ENCODE measurements at regions of chr13 and their contacts with region 1.

Region 1: GRCh38 chr13:41905600-41906254 is 55.2 kb downstream of the VWA8 start:
- DNase-seq: no peak
- ATAC-seq: peak; percentile 95
- H3K4me3 Mint-ChIP-seq: no peak overlapping the region
- H3K27ac Mint-ChIP-seq: no peak overlapping the region
- H3K4me1 Mint-ChIP-seq: peaks cover 24% of the 10 kb centered on the region
- H3K27me3 Mint-ChIP-seq: no peaks in the 10 kb centered on the region
- CTCF ChIP-seq: peak; percentile 80

Region 2: GRCh38 chr13:41077475-41077874 is 828.3 kb before region 1 on chr13:
- CTCF ChIA-PET with region 1: no interaction called
- POLR2A ChIA-PET with region 1: no interaction called
- intact Hi-C with region 1: no loop called
- DNase-seq: no peak
- ATAC-seq: no peak
- H3K4me3 Mint-ChIP-seq: no peak overlapping the region
- H3K27ac Mint-ChIP-seq: no peak overlapping the region
- H3K4me1 Mint-ChIP-seq: no peaks in the 10 kb centered on the region
- H3K27me3 Mint-ChIP-seq: no peaks in the 10 kb centered on the region
- CTCF ChIP-seq: no peak

Region 3: DNA sequence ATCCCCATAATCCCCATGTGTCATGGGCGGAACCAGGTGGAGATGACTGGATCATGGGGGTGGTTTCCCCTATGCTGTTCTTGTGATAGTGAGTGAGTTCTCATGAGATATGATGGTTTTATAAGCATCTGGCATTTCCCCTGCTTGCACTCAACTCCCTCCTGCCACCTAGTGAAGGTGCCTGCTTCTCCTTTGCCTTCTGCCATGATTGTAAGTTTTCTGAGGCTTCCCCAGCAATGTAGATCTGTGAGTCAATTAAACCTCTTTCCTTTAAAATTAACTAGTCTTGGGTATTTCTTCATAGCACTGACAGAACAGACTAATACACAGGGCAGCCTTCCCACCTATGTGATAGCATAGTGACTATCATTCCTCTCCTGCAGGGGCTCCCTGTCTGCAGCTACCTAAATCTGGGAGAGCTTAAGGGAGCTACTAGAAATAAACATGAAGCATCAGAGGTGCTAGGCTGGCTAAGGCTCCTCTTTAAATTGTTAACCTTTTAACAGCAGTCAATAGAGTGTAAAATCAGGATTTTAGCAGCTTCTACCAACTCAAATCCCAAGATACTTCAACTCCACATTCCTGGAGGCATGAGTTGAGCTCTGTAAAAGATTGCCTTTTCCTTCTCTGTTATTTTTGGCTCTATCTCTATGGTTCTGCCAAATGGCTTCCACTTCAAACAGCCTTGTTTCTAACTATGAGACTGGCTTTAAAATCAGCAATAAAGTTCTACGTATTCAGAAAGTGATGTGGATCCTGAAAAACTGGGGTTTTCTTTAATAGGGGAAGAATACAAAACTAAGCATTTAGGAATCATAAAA is 57.1 kb before region 1 on chr13:
- CTCF ChIA-PET with region 1: no interaction called
- POLR2A ChIA-PET with region 1: no interaction called
- intact Hi-C with region 1: no loop called
- DNase-seq: no peak
- ATAC-seq: no peak
- H3K4me3 Mint-ChIP-seq: no peak overlapping the region
- H3K27ac Mint-ChIP-seq: no peak overlapping the region
- H3K4me1 Mint-ChIP-seq: no peaks in the 10 kb centered on the region
- H3K27me3 Mint-ChIP-seq: no peaks in the 10 kb centered on the region
- CTCF ChIP-seq: no peak

Region 4: DNA sequence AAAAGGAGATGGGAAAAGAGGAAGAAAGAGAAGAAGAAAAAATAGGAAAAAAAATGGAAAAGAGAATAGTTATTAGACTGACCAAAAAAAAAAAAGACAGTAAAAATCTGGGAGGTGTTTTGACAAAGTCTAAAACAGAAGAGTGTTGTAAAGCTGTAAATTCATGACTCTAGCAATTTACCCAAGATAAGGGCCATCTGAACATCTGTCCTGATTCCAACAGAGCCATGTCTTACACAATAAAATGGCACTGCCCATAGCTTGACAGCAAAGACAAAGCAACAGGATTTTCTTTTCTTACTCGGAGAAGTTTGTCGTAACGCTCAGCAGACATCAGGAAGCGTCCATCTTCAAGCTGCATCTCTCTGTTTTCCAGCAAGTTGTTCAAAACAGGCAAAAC is 14.6 kb before region 1 on chr13:
- CTCF ChIA-PET with region 1: interaction called, 10 read pairs
- POLR2A ChIA-PET with region 1: no interaction called
- intact Hi-C with region 1: no loop called
- DNase-seq: no peak
- ATAC-seq: no peak
- H3K4me3 Mint-ChIP-seq: no peak overlapping the region
- H3K27ac Mint-ChIP-seq: no peak overlapping the region
- H3K4me1 Mint-ChIP-seq: peaks cover 2% of the 10 kb centered on the region
- H3K27me3 Mint-ChIP-seq: no peaks in the 10 kb centered on the region
- CTCF ChIP-seq: no peak

Region 5: GRCh38 chr13:41995946-41996345 is 90.2 kb after region 1 on chr13:
- CTCF ChIA-PET with region 1: no interaction called
- POLR2A ChIA-PET with region 1: no interaction called
- intact Hi-C with region 1: no loop called
- DNase-seq: peak; percentile 69
- ATAC-seq: peak; percentile 69
- H3K4me3 Mint-ChIP-seq: no peak overlapping the region
- H3K27ac Mint-ChIP-seq: no peak overlapping the region
- H3K4me1 Mint-ChIP-seq: peaks cover 8% of the 10 kb centered on the region
- H3K27me3 Mint-ChIP-seq: no peaks in the 10 kb centered on the region
- CTCF ChIP-seq: no peak

Region 6: DNA sequence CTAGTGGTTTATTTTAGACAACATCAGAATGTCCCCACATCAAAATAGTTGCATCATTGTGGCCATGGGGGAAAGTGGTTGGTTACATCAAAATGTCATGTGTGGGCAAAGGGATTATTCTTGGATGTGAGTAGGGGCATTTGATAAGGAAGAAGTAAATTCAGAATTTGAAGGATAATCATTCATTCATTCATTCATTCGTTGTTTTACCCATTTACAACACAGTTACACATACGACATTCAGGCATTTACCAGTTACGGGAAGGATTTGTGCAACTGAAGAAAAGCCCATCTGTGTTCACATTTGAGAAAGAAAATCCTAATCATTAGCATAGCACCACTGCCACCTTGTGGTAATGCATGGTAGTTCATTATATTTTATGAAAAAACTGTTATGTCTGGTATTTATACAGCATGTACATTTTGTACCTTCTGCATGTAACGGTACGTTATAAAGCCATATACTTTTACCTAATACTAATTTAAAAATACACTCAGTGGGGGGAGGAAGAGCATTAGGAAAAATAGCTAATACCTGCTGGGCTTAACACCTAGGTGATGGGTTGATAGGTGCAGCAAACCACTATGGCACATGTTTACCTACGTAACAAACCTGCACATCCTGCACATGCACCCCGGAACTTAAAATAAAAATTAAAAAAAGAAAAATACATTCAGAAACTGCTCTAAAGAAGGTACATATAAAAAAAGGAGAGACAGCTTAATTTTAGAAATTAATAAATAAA is 204.9 kb after region 1 on chr13:
- CTCF ChIA-PET with region 1: interaction called, 8 read pairs
- POLR2A ChIA-PET with region 1: no interaction called
- intact Hi-C with region 1: loop called (anchors 5 kb)
- DNase-seq: peak; percentile 35
- ATAC-seq: peak; percentile 74
- H3K4me3 Mint-ChIP-seq: no peak overlapping the region
- H3K27ac Mint-ChIP-seq: no peak overlapping the region
- H3K4me1 Mint-ChIP-seq: peaks cover 13% of the 10 kb centered on the region
- H3K27me3 Mint-ChIP-seq: no peaks in the 10 kb centered on the region
- CTCF ChIP-seq: peak; percentile 90